ENCODE measurements at regions of chr7 and their contacts with region 1.

Region 1: GRCh38 chr7:31000161-31000693 is 36.5 kb downstream of the GHRHR start:
- DNase-seq: no peak
- ATAC-seq: peak; percentile 73

Region 2: DNA sequence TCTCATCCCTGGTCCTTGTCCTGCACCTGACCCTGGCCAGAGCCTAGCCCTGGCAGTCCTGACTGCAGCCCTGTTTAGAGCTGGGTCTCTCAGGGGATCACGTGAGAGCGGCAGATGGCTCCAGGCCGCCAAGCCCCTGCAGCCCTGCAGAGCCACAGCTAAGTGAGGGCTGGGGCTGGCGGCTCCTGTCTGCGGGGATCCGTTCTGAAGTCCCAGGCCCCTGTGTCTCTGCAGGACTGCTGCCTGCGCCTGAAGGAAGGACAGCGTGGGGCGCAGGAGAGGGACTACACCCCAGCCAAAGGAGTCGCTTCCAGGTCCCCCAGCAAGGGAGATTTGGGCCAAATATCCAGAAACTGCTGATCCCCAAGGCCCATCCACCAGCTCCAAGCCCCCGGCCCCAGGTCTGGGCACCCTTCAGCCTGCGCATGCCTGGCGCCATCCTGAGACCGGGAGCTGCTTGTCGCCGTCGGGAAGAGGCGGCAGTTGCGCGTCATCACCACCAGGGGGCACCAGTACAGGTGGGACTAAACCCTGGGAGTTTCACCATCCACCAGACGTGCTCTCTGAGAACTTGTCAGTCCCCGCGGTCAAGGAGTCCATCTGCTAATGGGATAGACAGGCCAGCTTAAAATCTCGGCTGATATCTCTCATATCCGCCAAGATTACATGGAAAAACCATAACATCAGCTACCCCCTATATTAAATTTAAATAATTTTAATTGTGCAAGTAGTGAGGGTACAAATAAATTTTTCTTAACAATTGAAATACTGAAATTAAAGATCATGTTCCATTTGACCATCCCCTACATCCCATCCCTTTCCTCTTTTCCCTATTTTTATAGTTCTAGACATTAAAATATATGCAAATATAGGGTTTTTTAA is 61.6 kb before region 1 on chr7:
- intact Hi-C with region 1: no loop called
- DNase-seq: peak; percentile 92
- ATAC-seq: peak; percentile 87

Region 3: DNA sequence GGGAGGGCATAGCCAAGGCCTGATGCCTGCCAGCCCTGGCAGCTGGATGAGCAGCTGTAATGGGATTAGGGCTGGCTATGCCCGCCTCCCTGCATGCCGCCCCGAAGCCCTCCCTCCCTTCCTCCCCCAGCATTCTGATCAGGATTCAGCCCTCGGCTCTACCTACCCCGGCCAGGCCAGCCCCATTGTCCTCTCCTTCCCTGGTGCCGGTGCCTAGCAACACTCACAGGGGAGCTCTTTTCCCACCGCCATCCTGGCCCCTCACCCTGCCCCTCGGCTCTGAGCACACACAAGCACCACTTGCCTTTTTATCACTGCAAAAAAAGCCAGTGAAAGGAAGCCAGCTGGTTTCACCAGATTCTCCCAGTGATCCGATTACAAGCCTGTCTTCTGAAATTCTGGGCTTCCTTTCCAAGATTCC is 42.8 kb after region 1 on chr7:
- intact Hi-C with region 1: no loop called
- DNase-seq: no peak
- ATAC-seq: no peak

Region 4: DNA sequence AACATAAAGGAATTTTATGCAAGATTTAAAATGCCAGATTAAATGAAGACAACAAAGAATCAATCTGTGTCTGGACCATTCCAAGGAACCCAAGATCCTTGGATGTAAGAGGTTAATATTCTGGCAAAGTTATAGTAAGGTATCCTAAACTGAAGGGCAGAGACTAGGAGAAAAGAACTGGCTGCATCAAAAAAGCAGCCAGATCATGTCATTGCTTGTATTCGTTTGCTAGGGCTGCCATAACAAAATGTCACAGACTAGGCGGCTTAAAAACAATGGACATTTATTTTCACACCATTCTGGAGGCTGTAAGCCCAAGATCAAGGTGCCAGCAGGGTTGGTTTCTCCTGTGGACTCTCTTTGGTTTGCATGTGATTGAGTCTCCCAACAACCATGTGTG is 151.6 kb after region 1 on chr7:
- intact Hi-C with region 1: no loop called
- DNase-seq: no peak
- ATAC-seq: no peak

Region 5: DNA sequence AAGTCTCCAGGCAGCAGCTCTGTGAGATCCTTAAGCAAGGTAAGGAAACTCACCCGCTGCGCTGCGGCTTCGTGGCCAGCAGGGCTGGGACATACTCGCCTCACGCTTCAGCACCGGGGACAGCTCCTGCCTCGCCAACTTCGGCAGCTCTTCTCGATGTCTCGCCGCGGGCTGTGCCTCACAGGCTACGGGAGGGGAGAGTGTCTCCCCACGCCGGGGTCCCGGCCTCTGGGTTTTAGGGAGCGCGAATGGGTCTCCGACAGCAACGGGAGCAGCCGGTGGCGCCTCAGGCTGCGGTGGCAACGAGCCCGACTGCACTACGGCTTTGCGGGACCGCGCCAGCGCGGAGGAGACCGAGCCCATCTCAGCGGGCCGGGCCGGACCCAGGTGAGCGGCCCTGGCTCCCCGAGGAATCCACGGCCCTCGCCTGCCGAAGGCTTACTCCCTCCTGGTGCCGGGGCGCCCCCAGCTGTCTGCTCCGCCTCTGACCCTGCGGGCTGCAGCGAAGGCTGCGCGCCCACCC is 1427.6 kb after region 1 on chr7:
- intact Hi-C with region 1: loop called (anchors 10 kb)
- DNase-seq: peak; percentile 80
- ATAC-seq: peak; percentile 65